Activated naive CD4-positive, alpha-beta T cell treated with anti-CD3 and anti-CD28 coated beads for 36 hours (primary cell): ENCODE measurements at regions of chr13 and their contacts with region 1.

Region 1: GRCh38 chr13:19888799-19889198 is 25.4 kb upstream of the ZMYM5 start:
- DNase-seq: no peak
- H3K4me3 Mint-ChIP-seq: no peak overlapping the region
- H3K27ac Mint-ChIP-seq: no peak overlapping the region
- H3K4me1 Mint-ChIP-seq: no peaks in the 10 kb centered on the region
- H3K27me3 Mint-ChIP-seq: no peaks in the 10 kb centered on the region

Region 2: GRCh38 chr13:19153782-19154450 is 734.9 kb before region 1 on chr13:
- CTCF ChIA-PET with region 1: no interaction called
- intact Hi-C with region 1: loop called (anchors 10 kb)
- DNase-seq: peak; percentile 47
- H3K4me3 Mint-ChIP-seq: no peak overlapping the region
- H3K27ac Mint-ChIP-seq: no peak overlapping the region
- H3K4me1 Mint-ChIP-seq: no peaks in the 10 kb centered on the region
- H3K27me3 Mint-ChIP-seq: no peaks in the 10 kb centered on the region